Activated CD8-positive, alpha-beta T cell treated with anti-CD3 and anti-CD28 coated beads for 36 hours (primary cell): ENCODE measurements at regions of chr14 and their contacts with region 1.

Region 1: GRCh38 chr14:56339855-56340701 is 221.9 kb downstream of the PELI2 start:
- DNase-seq: peak; percentile 78
- ATAC-seq: peak; percentile 94
- H3K4me3 Mint-ChIP-seq: no peak overlapping the region
- H3K27ac Mint-ChIP-seq: no peak overlapping the region
- H3K4me1 Mint-ChIP-seq: no peaks in the 10 kb centered on the region
- H3K27me3 Mint-ChIP-seq: no peaks in the 10 kb centered on the region
- CTCF ChIP-seq: peak; percentile 64

Region 2: DNA sequence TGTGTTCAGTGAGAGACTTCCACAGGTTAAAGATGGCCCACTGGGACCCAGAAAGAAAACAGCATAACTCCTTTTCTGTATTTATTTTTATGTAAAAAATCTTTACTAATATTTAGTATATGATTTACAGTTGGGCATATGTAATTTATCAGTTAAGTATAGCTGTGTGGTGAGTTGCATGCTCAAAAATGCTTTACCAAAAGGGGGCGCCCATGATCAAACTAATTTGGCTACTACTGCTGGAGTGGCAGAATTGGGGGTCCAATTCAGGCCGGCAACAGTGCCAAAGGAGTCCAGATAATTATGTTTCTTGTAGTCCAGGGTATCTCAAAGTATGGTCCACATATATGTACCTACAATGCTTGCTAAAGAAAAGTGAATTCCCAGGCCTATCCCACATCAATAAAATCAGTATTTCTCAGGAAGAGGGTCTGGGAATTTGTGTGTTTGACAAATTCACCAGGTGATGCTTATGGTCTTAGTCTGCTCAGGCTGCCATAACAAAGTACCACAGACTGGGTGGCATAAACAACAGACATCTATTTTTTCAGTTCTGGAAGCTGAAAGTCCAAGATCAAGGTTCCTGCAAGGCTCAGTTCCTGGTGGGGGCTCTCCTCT is 608.1 kb before region 1 on chr14:
- CTCF ChIA-PET with region 1: interaction called, 16 read pairs
- POLR2A ChIA-PET with region 1: no interaction called
- intact Hi-C with region 1: loop called (anchors 5 kb)
- DNase-seq: peak; percentile 72
- ATAC-seq: peak; percentile 53
- H3K4me3 Mint-ChIP-seq: no peak overlapping the region
- H3K27ac Mint-ChIP-seq: no peak overlapping the region
- H3K4me1 Mint-ChIP-seq: no peaks in the 10 kb centered on the region
- H3K27me3 Mint-ChIP-seq: no peaks in the 10 kb centered on the region
- CTCF ChIP-seq: peak; percentile 78

Region 3: DNA sequence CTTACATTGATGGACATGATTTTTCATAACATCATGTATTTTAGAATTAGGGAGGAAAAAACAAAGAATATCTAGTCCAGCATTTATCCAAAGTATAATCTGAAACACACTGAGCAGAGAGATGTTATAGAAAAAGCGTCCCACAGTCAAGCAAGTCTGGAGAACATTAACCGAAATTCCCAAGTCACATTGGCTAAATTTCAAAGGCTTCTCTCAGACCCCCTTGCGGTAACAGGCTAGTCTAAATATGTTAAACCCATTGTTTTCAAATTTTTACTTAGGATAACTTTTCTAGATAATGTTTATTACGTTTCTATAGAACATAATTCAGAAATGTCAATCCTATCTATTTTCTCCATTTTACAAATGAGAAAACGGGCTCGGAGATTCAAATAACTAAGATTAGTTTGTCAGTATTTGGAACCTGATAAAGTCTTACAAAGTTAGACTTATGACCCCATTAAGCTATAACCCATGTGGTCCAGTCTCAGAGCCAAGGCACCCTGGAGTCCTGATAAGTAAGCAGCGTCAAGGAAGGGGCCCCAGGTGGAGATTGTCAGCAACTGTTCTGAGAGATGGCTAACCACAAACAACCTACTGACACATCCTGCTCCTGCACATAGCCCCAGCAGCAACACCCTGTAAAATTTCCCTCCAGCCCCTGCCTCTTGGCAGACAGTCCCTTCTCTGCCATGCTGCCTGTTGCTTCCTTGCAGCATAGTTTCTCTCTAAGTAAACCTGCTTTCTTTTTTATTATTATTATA is 19.0 kb after region 1 on chr14:
- CTCF ChIA-PET with region 1: interaction called, 10 read pairs
- POLR2A ChIA-PET with region 1: no interaction called
- intact Hi-C with region 1: no loop called
- DNase-seq: peak; percentile 58
- ATAC-seq: peak; percentile 88
- H3K4me3 Mint-ChIP-seq: no peak overlapping the region
- H3K27ac Mint-ChIP-seq: no peak overlapping the region
- H3K4me1 Mint-ChIP-seq: peaks cover 4% of the 10 kb centered on the region
- H3K27me3 Mint-ChIP-seq: no peaks in the 10 kb centered on the region
- CTCF ChIP-seq: no peak

Region 4: DNA sequence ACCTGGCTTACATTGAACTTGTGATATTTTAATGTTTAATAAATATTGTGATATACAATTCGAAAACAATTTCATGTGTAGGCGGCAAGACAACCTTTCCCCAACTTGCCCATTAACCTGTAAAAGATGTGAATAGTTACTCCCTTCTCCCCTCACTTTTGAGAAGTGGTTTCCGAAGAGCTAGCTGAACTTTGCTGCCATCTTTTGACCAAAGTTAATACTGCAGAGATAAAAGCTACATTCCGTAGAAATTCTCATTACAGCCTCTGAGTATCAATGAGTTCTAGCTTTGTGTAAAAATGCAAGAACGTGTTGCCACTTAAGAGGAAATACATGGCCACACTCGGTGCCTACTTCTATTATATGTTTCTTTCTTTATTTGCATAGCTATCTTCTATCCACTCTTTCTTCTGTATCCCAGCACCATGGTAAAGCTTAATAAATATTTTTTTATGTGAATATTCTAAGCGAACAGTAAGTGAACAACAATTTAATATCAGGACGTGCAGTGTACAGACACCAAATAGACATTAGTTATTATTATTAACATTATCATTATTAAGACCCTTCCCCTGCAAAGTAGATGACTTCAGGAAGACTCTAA is 134.4 kb after region 1 on chr14:
- CTCF ChIA-PET with region 1: interaction called, 11 read pairs
- POLR2A ChIA-PET with region 1: no interaction called
- intact Hi-C with region 1: no loop called
- DNase-seq: no peak
- ATAC-seq: peak; percentile 66
- H3K4me3 Mint-ChIP-seq: no peak overlapping the region
- H3K27ac Mint-ChIP-seq: no peak overlapping the region
- H3K4me1 Mint-ChIP-seq: no peaks in the 10 kb centered on the region
- H3K27me3 Mint-ChIP-seq: no peaks in the 10 kb centered on the region
- CTCF ChIP-seq: peak; percentile 72